ENCODE measurements at regions of chr15 and their contacts with region 1.

Region 1: DNA sequence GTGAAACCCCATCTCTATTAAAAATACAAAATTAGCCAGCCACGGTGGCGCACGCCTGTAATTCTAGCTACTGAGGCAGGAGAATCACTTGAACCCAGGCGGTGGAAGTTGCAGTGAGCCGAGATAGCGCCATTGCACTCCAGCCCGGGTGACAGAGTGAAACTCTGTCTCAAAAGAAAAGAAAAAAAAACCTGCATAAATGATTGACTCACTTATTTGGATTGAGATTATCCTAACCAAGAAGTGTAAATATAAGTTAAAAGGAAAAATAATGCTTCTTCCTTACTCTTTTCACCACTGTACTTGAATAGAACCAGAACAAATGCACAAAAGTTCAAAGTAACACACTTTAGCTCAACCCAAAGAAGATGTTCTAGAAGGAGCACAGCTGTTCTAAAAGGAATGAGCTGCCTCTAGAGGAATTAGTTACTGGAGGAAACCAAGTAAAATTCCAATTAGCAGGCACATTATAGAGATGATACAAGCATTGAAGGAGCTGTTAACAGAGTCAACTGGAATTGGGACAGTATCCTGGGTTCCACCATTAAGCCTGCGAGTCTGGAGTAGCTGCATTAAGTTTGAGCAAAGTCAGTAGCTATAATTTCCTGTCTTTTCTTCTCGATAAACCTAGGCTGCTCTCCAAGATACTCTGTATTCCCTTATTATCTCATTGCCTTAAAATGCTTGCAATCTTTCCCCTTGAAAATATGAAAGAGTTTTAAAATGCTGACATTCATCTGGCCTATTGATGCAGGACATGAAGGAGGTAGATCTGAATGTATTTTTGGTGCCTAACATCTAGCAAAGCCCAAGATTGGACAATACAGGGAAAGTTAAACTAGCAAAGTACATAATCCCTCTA is 9.5 kb downstream of the MTHFS start:
- DNase-seq: no peak
- H3K4me3 ChIP-seq: no peak overlapping the region
- H3K27ac ChIP-seq: peak overlapping the region in 3 of 8 donors; percentile 6 to 49 (median 19)
- H3K4me1 ChIP-seq: peaks cover 0 to 22% (median 0%) of the 10 kb centered on the region in 6 donors
- H3K27me3 ChIP-seq: no peaks in the 10 kb centered on the region
- CTCF ChIP-seq: no peak
- POLR2A ChIP-seq: no peak

Region 2: GRCh38 chr15:79989682-79990081 is 102.4 kb after region 1 on chr15:
- intact Hi-C with region 1: loop called (anchors 10 kb)
- DNase-seq: no peak
- H3K4me3 ChIP-seq: peak overlapping the region in 1 of 8 donors; percentile 34
- H3K27ac ChIP-seq: peak overlapping the region in 6 of 8 donors; percentile 52 to 83 (median 72)
- H3K4me1 ChIP-seq: peaks cover 0 to 43% (median 8%) of the 10 kb centered on the region in 6 donors
- H3K27me3 ChIP-seq: peaks cover 0 to 4% (median 0%) of the 10 kb centered on the region in 7 donors
- CTCF ChIP-seq: no peak
- POLR2A ChIP-seq: no peak

Region 3: GRCh38 chr15:80925597-80926059 is 1038.3 kb after region 1 on chr15:
- intact Hi-C with region 1: no loop called
- DNase-seq: no peak
- H3K4me3 ChIP-seq: no peak overlapping the region
- H3K27ac ChIP-seq: no peak overlapping the region
- H3K4me1 ChIP-seq: peaks cover 0 to 8% (median 0%) of the 10 kb centered on the region in 6 donors
- H3K27me3 ChIP-seq: no peaks in the 10 kb centered on the region
- CTCF ChIP-seq: no peak
- POLR2A ChIP-seq: no peak

Measured in spleen (tissue), 13 donors.